Mucosa of descending colon (tissue), 3 donors: ENCODE measurements at regions of chr16 and their contacts with region 1.

Region 1: GRCh38 chr16:2874912-2875362 is 8.1 kb upstream of the FLYWCH2 start:
- DNase-seq: peak; percentile 80 to 84 (median 84)
- ATAC-seq: peak; percentile 100
- H3K4me3 ChIP-seq: no peak overlapping the region
- H3K4me1 ChIP-seq: no peaks in the 10 kb centered on the region
- CTCF ChIP-seq: peak; percentile 88

Region 2: GRCh38 chr16:1863681-1864460 is 1011.1 kb before region 1 on chr16:
- intact Hi-C with region 1: no loop called
- DNase-seq: no peak
- ATAC-seq: peak; percentile 56
- H3K4me3 ChIP-seq: no peak overlapping the region
- H3K4me1 ChIP-seq: peaks cover 3% of the 10 kb centered on the region
- CTCF ChIP-seq: peak; percentile 27

Region 3: DNA sequence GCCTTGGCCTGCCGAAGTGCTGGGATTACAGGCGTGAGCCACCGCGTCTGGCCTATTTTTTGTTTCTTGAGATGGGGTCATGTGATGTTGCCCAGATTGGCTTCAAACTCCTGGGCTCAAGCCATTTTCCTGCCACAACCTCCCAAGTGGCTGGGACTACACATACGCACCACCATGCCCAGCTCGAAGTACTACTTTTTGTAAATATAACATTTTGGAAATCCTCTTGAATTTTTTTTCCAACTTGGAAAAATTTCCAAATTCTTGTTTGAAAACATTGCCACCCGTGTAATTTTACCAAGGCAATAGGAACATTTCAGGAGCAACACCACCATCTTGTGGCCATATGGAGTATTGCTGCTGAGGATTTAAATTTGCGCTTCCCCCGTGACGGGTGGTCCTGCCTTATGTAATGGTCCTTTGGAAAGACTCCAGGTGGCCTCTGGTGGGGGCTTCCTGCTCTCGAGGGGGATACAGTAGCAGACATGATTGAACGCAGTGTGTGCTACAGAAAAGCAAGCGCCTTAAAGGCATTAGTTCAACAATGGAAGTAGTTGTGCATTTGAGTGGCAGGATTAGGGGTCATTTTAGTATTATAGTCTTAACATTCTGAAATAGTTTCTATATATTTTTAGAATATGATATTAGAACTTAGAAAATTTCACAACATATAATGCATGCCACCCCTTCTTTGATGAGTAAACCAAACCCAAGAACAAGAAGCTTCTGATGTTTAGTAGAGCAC is 44.7 kb after region 1 on chr16:
- intact Hi-C with region 1: loop called (anchors 5 to 10 kb)
- DNase-seq: peak in 1 of 3 donors; percentile 68
- ATAC-seq: peak; percentile 69
- H3K4me3 ChIP-seq: no peak overlapping the region
- H3K4me1 ChIP-seq: peaks cover 5% of the 10 kb centered on the region
- CTCF ChIP-seq: peak; percentile 89

Region 4: DNA sequence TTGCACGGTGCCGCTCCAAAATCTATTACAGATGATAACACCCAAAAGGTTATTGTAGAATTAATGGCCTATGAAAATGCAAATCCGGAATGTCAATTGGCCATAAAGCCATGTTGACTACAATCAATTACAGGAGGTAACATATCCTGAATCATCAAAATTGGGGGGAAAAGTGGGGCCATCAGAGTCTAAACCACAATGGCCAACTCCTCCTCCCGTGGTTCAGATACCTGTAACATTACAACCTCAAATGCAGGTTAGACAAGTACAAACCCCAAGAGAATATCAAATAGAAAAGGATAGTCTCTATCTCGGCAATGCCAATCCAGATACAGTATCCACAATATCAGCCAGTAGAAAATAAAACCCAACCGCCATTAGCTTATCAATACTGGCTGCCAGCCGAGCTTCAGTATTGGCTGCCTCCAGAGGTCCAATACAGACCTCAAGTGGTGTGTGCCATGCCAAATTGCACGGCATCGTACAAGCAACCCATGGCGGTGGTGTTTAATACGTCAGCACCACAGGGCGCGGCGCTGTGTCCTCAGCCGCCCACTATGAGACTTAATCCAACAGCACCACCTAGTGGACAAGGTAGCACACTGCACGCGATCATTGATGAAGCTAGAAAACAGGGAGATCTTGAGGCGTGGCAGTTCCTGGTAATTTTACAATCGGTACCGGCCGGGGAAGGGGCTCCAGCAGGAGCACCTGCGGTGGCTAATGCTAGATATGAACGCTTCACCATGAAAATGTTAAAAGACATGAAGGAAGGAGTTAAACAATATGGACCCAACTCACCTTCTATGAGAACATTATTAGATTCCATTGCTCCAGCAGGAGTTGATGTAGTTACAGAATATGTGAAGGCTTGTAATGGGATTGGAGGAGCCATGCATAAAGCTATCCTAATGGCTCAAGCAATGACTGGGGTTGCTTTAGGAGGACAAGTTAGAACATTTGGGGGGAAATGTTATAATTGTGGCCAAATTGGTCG is 52.0 kb after region 1 on chr16:
- intact Hi-C with region 1: loop called (anchors 5 to 10 kb)
- DNase-seq: peak; percentile 88 to 97 (median 90)
- ATAC-seq: peak; percentile 99
- H3K4me3 ChIP-seq: no peak overlapping the region
- H3K4me1 ChIP-seq: peaks cover 5% of the 10 kb centered on the region
- CTCF ChIP-seq: peak; percentile 96